OCI-LY7 (cell line): ENCODE measurements at regions of chr15 and their contacts with region 1.

Region 1: GRCh38 chr15:66356345-66357236 is at the start of gene TIPIN:
- DNase-seq: peak; percentile 99
- H3K4me3 ChIP-seq: peak within 1 kb of the TSS; percentile 87
- H3K27ac ChIP-seq: peak within 1 kb of the TSS; percentile 84
- H3K4me1 ChIP-seq: peaks cover 50% of the 10 kb centered on the region
- CTCF ChIP-seq: no peak
- total RNA-seq, gene TIPIN: 26.0 and 28.6 TPM in 2 replicates

Region 2: DNA sequence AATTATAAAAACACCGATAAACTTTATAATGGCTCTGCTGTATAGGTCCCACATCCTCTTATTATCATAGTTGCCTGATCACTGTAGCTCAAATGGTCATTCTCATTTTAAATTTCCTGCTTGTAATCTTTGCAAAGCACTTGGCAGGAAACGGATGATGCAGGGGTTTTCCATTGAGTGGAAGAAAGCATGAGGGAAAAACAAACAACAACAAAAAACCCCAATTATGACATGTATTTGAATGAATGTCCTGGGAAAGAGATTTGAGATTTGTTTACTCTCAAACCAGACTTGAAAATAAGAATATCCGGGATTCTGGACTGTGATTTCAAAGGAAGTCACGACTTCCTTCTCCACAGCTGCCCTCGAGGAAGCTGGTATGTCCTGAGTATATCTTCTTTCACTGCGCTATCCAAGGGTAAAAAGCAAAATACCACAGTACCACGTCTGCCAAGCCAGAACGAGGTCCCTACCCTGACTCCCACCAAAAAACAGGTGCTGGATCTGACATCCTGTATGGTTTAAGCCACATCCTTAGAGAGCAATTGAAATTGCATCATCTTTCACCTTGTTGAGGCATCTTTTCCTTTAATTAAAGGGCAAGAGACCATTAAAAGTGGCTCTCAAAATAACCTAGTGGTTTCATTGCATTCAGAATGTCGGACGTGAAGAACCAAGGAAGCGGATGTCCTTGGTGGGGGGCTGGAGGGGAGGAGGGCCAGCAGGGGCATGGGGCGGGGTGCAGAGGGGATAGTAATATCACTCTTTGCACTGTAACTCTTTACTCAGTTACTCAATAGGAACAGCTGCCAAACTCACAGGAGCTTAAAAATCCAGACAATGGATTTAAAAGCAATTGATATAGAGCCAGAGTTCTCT is 13.4 kb after region 1 on chr15:
- CTCF ChIA-PET with region 1: interaction called, 3 read pairs
- POLR2A ChIA-PET with region 1: interaction called, 3 read pairs
- intact Hi-C with region 1: loop called (anchors 2 kb)
- DNase-seq: peak; percentile 82
- H3K4me3 ChIP-seq: peak overlapping the region; percentile 58
- H3K27ac ChIP-seq: peak overlapping the region; percentile 78
- H3K4me1 ChIP-seq: peaks cover 36% of the 10 kb centered on the region
- CTCF ChIP-seq: no peak

Region 3: GRCh38 chr15:66619151-66619903 is 262.7 kb after region 1 on chr15:
- CTCF ChIA-PET with region 1: no interaction called
- POLR2A ChIA-PET with region 1: no interaction called
- intact Hi-C with region 1: no loop called
- DNase-seq: peak; percentile 74
- H3K4me3 ChIP-seq: no peak overlapping the region
- H3K27ac ChIP-seq: no peak overlapping the region
- H3K4me1 ChIP-seq: no peaks in the 10 kb centered on the region
- CTCF ChIP-seq: peak; percentile 90